ENCODE measurements at regions of chr7 and their contacts with region 1.

Region 1: DNA sequence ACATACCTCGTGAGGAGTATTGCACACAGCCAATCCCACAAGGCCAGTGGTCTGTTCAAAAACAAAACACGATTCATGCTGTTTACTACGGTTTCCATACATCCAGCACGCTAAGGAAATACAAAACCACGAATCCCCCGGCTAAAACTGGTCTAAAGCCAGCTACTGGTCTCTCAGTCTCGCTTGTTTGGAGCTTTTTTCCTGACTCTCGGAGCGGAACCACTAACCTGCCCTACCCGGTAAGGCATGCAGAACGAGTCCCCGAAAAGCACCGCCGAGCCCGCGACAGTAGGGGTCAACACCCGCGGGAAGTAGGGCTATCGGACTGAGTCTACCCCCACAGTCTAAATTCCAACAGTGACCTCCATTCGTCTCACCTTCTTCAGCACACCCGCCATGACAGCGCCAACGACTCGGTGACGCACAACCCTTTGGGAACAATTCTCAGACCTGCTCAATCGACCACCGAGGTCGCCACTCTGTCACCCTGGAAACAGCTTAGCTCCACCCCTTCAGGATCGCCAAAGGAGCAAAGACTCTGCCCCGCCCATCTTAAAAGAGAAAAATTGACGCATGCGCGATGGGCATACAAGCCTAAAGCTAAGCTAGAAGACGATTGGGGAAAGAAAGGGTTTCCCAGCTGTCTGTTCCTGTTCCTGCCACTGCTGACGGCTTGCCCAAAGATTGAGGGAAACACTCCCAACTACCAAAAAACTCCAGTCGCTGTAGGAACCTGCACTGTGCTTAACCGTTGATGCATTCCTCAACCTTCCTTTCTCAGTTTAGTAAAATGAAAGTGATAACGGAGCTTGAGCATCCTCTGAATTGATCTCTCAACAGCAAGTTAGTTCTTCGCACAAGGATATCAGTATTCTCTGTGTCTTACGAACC is at the start of gene NDUFA5:
- DNase-seq: peak; percentile 98 to 99
- ATAC-seq: peak; percentile 99
- H3K4me3 ChIP-seq: peak within 1 kb of the TSS; percentile 71 to 99 (median 96)
- H3K27ac ChIP-seq: peak within 1 kb of the TSS; percentile 91 to 99 (median 96)
- H3K4me1 ChIP-seq: peaks cover 27 to 40% of the 10 kb centered on the region in 2 donors
- H3K27me3 ChIP-seq: no peaks in the 10 kb centered on the region
- CTCF ChIP-seq: peak in 1 of 5 experiments; percentile 2
- POLR2A ChIP-seq: peak; percentile 72 to 81
- total RNA-seq, gene NDUFA5: 82.8 to 148 (median 137) TPM

Region 2: DNA sequence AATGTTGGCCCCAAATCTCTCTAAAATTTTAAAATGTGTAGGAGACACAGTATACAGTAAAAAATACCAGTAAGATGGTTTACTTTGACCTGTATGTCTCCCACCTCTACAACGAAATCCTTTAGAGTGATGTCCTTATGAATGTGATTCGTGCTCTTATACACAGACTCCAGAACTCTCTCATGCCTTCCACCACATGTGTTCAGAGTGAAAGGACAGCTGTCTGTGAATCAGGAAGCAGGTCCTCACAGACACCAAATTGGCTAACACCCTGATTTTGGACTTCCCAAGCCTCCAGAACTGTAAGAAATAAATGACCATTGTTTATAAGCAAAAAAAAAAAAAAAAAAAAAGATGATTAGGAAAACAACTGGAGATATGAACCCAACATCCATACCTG is 893.9 kb before region 1 on chr7:
- in situ Hi-C with region 1: no loop called
- intact Hi-C with region 1: no loop called
- DNase-seq: no peak
- ATAC-seq: no peak
- H3K4me3 ChIP-seq: no peak overlapping the region
- H3K27ac ChIP-seq: no peak overlapping the region
- H3K4me1 ChIP-seq: no peaks in the 10 kb centered on the region
- H3K27me3 ChIP-seq: no peaks in the 10 kb centered on the region
- CTCF ChIP-seq: no peak
- POLR2A ChIP-seq: no peak

Region 3: DNA sequence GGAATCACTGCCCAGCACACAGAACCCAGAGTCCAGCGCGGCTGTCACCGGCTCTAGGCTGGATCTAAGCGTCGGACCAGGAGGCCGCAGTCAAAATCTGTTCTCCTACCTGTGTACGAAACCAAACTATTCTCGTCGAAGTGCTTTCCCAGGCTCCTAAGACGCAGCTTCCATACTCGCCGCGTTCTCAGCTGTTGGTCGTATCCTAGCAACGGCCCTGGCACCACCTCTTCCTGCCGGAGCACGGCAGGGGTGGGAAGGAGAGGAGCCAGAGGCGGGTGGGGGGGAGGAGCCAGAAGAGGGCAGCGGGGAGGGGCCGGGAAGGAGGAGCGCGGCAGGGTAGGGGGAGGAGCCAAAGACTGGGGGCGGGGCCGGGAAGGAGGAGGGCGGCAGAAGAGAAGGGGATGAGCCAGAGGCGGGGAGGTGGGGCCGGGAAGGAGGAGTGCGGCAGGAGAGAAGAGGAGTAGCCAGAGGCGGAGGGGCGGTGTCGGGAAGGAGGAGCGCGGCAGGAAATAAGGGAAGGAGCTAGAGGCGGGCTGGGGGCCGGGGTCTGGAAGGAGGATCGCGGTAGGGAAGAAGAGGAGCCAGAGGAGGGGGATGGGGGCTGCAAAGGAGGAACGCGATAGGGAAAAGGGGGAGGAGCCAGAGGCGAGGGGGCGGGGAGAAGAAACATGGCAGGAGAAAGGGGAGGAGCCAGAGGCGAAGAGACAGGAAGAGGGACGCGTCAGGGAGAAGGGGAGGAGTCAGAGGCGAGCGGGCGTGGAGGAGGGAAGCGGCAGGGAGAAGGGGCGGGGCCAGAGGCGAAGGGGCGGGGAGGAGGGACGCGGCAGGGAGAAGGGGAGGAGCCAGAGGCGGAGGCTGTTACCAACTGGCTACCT is 23.0 kb before region 1 on chr7 and contains the start of gene IQUB:
- in situ Hi-C with region 1: no loop called
- intact Hi-C with region 1: loop called (anchors 1 kb)
- DNase-seq: peak; percentile 98
- ATAC-seq: peak; percentile 92 to 93
- H3K4me3 ChIP-seq: peak within 1 kb of the TSS; percentile 67 to 76 (median 72)
- H3K27ac ChIP-seq: peak within 1 kb of the TSS; percentile 89 to 93 (median 92)
- H3K4me1 ChIP-seq: peaks cover 9 to 17% of the 10 kb centered on the region in 2 donors
- H3K27me3 ChIP-seq: peaks cover 0 to 5% (median 2%) of the 10 kb centered on the region in 3 donors
- CTCF ChIP-seq: no peak
- POLR2A ChIP-seq: peak; percentile 47 to 50
- total RNA-seq, gene IQUB: 0.15 to 0.42 (median 0.26) TPM in 3 of 4 donors, not detected in the other

Region 4: GRCh38 chr7:124929467-124930172 is 1372.0 kb after region 1 on chr7 and contains the start of gene POT1:
- in situ Hi-C with region 1: no loop called
- intact Hi-C with region 1: loop called (anchors 10 kb)
- DNase-seq: peak; percentile 96 to 99
- ATAC-seq: peak; percentile 99 to 100
- H3K4me3 ChIP-seq: peak within 1 kb of the TSS; percentile 84 to 86 (median 84)
- H3K27ac ChIP-seq: peak within 1 kb of the TSS; percentile 88 to 93 (median 90)
- H3K4me1 ChIP-seq: peaks cover 11 to 20% of the 10 kb centered on the region in 2 donors
- H3K27me3 ChIP-seq: no peaks in the 10 kb centered on the region
- CTCF ChIP-seq: no peak
- POLR2A ChIP-seq: peak; percentile 21 to 52
- total RNA-seq, gene POT1: 5.1 to 20.3 (median 10.4) TPM